ENCODE measurements at regions of chr2 and their contacts with region 1.

Region 1: GRCh38 chr2:31239593-31240177 is 5.7 kb downstream of the EHD3 start:
- DNase-seq: peak; percentile 87 to 89
- ATAC-seq: peak; percentile 91
- H3K4me3 ChIP-seq: no peak overlapping the region
- H3K27ac ChIP-seq: peak overlapping the region; percentile 76 to 89
- H3K4me1 ChIP-seq: peaks cover 0 to 3% of the 10 kb centered on the region in 2 donors
- H3K27me3 ChIP-seq: no peaks in the 10 kb centered on the region

Region 2: DNA sequence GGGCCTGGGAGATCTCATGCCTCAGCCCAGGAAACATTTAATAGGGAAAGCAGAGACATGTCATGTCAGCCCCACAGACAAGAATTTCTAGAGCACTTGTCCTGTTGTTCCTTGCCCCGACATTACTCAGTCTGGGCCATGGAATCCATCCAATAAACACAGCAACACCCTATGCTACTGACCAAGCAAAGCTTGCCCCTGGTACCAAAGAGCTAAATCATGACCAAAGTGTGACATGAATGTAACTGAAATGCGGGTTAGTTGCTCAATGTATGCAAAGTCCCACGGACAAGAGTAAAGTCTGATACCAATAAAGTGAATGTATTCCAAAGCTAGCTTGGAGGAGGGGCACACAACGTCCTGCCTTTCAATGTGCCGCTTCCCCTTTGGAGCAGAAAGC is 29.4 kb after region 1 on chr2:
- intact Hi-C with region 1: loop called in 1 of 2 experiments (anchors 2 kb)
- DNase-seq: no peak
- ATAC-seq: peak; percentile 4
- H3K4me3 ChIP-seq: no peak overlapping the region
- H3K27ac ChIP-seq: peak overlapping the region; percentile 35 to 68
- H3K4me1 ChIP-seq: peaks cover 5% of the 10 kb centered on the region in 2 donors
- H3K27me3 ChIP-seq: no peaks in the 10 kb centered on the region

Region 3: DNA sequence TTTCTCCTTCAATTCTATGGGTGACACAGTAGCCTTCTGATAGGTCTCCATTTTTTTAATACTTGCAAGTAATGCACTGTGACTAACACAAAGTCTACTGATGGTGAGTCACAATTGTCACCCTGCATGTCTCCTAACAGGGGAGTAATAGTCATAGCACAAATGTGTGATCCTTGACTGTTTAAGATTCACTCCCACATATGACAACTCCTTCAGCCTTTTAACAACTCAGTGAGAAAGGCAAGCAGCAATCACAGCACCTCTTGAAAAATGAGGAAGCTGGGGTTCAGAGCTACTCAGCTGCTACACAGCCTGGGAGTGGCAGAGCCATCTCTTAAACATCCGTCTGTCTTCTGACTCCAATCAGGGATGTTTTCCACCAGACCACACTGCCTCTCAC is 58.1 kb after region 1 on chr2:
- intact Hi-C with region 1: loop called (anchors 2 to 5 kb)
- DNase-seq: no peak
- ATAC-seq: no peak
- H3K4me3 ChIP-seq: no peak overlapping the region
- H3K27ac ChIP-seq: peak overlapping the region; percentile 58 to 99
- H3K4me1 ChIP-seq: peaks cover 8 to 16% of the 10 kb centered on the region in 2 donors
- H3K27me3 ChIP-seq: no peaks in the 10 kb centered on the region

Measured in aorta (tissue), 5 donors.